Caco-2 (cell line): ENCODE measurements at regions of chr20 and their contacts with region 1.

Region 1: DNA sequence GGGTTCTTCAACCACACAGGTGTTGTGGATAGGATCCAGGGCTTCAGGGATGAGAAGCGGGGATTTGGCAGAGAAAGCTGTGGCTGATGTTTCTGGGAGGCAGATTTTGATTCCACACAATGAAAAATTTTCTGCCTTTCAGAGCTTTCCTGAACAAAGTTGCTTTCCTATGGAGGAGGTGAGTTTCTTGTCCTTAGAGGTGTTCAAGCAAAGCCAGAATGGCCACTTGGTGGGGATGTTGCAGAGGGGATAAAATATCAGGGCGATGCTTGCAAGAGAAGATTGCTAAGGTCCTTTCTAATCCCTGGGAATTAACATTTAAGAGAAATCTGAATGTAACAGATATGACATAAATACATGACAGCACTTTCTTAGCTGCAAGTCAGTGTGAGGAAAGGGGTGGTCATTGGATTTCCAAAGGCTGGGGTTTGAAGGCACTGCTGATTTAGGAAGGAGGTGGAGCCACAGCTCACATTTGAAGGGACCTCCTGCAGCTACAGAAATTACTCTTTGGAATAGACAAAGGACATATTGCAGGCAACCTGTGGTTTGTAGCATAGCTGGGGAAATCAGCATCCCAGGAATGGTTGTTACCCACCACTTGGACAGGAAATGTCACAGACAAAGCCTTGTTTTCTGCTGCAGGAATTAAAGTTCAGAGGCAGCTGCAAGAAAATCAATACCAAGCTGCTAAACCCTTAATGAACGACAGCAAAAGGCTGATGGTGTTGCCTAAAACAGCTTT is 271.1 kb upstream of the CHD6 start:
- DNase-seq: peak in 1 of 2 experiments; percentile 49
- H3K4me3 ChIP-seq: no peak overlapping the region
- H3K4me3 Mint-ChIP-seq: no peak overlapping the region
- H3K27ac Mint-ChIP-seq: no peak overlapping the region
- H3K4me1 ChIP-seq: no peaks in the 10 kb centered on the region
- H3K4me1 Mint-ChIP-seq: no peaks in the 10 kb centered on the region
- H3K27me3 ChIP-seq: no peaks in the 10 kb centered on the region; the same call in 1 of the 2 replicates
- H3K27me3 Mint-ChIP-seq: peaks cover 21% of the 10 kb centered on the region
- CTCF ChIP-seq: peak in 1 of 2 experiments; percentile 39

Region 2: DNA sequence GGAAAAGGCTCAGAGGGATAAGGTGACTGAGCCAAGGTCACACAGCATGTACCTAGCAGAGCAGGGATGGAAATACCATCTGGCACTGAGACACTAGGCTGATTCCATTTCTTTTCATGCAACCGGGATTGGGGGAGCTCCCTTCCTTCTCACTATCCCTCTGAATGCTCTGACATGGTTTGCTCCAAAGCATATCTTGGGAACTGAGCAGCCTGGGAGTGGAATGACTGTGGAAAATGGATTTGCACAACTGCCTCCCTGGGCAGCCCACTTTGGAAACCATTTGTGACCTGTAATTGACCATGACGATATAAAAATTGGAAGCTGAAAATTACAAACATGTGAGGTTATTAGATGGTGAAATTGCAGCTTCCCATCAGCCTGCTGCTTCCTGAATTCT is 37.9 kb after region 1 on chr20:
- CTCF ChIA-PET with region 1: no interaction called
- POLR2A ChIA-PET with region 1: no interaction called
- intact Hi-C with region 1: no loop called
- DNase-seq: no peak
- H3K4me3 ChIP-seq: no peak overlapping the region
- H3K4me3 Mint-ChIP-seq: no peak overlapping the region
- H3K27ac Mint-ChIP-seq: no peak overlapping the region
- H3K4me1 ChIP-seq: no peaks in the 10 kb centered on the region
- H3K4me1 Mint-ChIP-seq: no peaks in the 10 kb centered on the region
- H3K27me3 ChIP-seq: no peaks in the 10 kb centered on the region
- H3K27me3 Mint-ChIP-seq: peaks cover 22% of the 10 kb centered on the region
- CTCF ChIP-seq: no peak

Region 3: GRCh38 chr20:42041072-42041471 is 151.8 kb after region 1 on chr20:
- CTCF ChIA-PET with region 1: no interaction called
- POLR2A ChIA-PET with region 1: no interaction called
- intact Hi-C with region 1: loop called (anchors 2 kb)
- DNase-seq: peak in 1 of 2 experiments; percentile 49
- H3K4me3 ChIP-seq: no peak overlapping the region
- H3K4me3 Mint-ChIP-seq: no peak overlapping the region
- H3K27ac Mint-ChIP-seq: no peak overlapping the region
- H3K4me1 ChIP-seq: no peaks in the 10 kb centered on the region
- H3K4me1 Mint-ChIP-seq: no peaks in the 10 kb centered on the region
- H3K27me3 ChIP-seq: no peaks in the 10 kb centered on the region
- H3K27me3 Mint-ChIP-seq: peaks cover 6% of the 10 kb centered on the region
- CTCF ChIP-seq: peak; percentile 62 to 69

Region 4: GRCh38 chr20:42110301-42110700 is 221.0 kb after region 1 on chr20:
- CTCF ChIA-PET with region 1: no interaction called
- POLR2A ChIA-PET with region 1: no interaction called
- intact Hi-C with region 1: no loop called
- DNase-seq: no peak
- H3K4me3 ChIP-seq: no peak overlapping the region
- H3K4me3 Mint-ChIP-seq: no peak overlapping the region
- H3K27ac Mint-ChIP-seq: no peak overlapping the region
- H3K4me1 ChIP-seq: no peaks in the 10 kb centered on the region
- H3K4me1 Mint-ChIP-seq: no peaks in the 10 kb centered on the region
- H3K27me3 ChIP-seq: no peaks in the 10 kb centered on the region; the same call in 1 of the 2 replicates
- H3K27me3 Mint-ChIP-seq: peaks cover 14% of the 10 kb centered on the region
- CTCF ChIP-seq: no peak

Region 5: GRCh38 chr20:42267802-42268384 is 378.6 kb after region 1 on chr20:
- CTCF ChIA-PET with region 1: no interaction called
- POLR2A ChIA-PET with region 1: no interaction called
- intact Hi-C with region 1: loop called (anchors 5 kb)
- DNase-seq: no peak
- H3K4me3 ChIP-seq: no peak overlapping the region
- H3K4me3 Mint-ChIP-seq: no peak overlapping the region
- H3K27ac Mint-ChIP-seq: no peak overlapping the region
- H3K4me1 ChIP-seq: no peaks in the 10 kb centered on the region
- H3K4me1 Mint-ChIP-seq: no peaks in the 10 kb centered on the region
- H3K27me3 ChIP-seq: no peaks in the 10 kb centered on the region
- H3K27me3 Mint-ChIP-seq: peaks cover 17% of the 10 kb centered on the region
- CTCF ChIP-seq: no peak